ENCODE measurements at regions of chr12 and their contacts with region 1.

Region 1: GRCh38 chr12:2613326-2614073 is 181.3 kb upstream of the FKBP4 start:
- DNase-seq: peak; percentile 78
- ATAC-seq: peak; percentile 99
- H3K4me3 Mint-ChIP-seq: no peak overlapping the region
- H3K27ac Mint-ChIP-seq: no peak overlapping the region
- H3K4me1 Mint-ChIP-seq: peaks cover 13% of the 10 kb centered on the region
- H3K27me3 Mint-ChIP-seq: peaks cover 36% of the 10 kb centered on the region

Region 2: GRCh38 chr12:2550561-2551411 is 62.7 kb before region 1 on chr12:
- CTCF ChIA-PET with region 1: no interaction called
- POLR2A ChIA-PET with region 1: no interaction called
- intact Hi-C with region 1: no loop called
- DNase-seq: no peak
- ATAC-seq: no peak
- H3K4me3 Mint-ChIP-seq: no peak overlapping the region
- H3K27ac Mint-ChIP-seq: no peak overlapping the region
- H3K4me1 Mint-ChIP-seq: no peaks in the 10 kb centered on the region
- H3K27me3 Mint-ChIP-seq: peaks cover 3% of the 10 kb centered on the region

Region 3: DNA sequence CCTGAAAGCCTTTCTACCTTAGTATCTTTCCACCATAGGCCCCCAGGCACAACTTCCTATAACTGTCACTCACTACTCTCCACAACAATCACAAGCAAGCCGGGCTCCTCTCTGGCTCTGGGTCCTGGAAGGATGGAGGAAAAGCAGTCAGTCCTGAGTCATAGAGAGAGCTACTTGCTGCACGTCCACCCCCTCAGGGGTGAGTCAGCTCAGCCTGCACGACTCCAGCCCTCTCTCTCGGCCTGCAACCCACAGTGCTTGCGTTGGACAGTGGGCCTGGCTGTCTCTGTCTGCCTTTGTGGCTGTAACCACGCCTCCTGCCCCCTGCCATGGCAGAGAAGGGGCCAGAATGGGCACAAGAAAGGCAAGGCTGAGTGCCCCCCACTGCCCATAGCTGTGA is 27.2 kb after region 1 on chr12:
- CTCF ChIA-PET with region 1: no interaction called
- POLR2A ChIA-PET with region 1: no interaction called
- intact Hi-C with region 1: loop called in 1 of 2 experiments (anchors 2 kb)
- DNase-seq: peak; percentile 65
- ATAC-seq: peak; percentile 95
- H3K4me3 Mint-ChIP-seq: no peak overlapping the region
- H3K27ac Mint-ChIP-seq: no peak overlapping the region
- H3K4me1 Mint-ChIP-seq: peaks cover 25% of the 10 kb centered on the region
- H3K27me3 Mint-ChIP-seq: peaks cover 13% of the 10 kb centered on the region

Measured in activated CD4-positive, alpha-beta T cell treated with anti-CD3 and anti-CD28 coated beads for 36 hours (primary cell).